ENCODE measurements at regions of chr12 and their contacts with region 1.

Region 1: DNA sequence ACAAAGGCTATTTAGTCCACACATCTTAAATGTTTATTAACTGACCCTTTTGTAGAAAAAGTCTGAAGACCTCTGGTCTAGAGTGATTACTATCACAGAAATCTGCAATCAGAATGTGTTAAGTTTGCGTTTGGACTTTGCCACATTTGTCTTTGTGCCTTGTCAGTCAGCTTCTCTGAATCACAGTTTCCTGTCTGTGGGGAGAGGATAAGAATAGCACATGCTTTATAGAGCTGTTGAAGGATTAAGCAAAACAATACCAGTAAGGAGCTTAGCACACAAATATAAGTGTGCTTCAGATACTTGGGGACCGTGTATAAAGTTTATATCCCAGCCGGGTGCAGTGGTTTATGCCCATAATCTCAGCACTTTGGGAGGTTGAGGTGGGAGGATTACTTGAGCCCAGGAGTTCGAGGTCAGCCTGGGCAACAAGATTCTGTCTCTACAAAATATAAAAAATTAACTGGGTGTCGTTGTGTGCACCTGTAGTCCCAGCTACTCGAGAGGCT is 63.0 kb upstream of the BTG1 start:
- DNase-seq: peak in 7 of 9 donors; percentile 55 to 76 (median 63)
- ATAC-seq: peak; percentile 92
- H3K4me3 ChIP-seq: peak overlapping the region; percentile 29
- H3K4me3 Mint-ChIP-seq: peak overlapping the region; percentile 58 to 90 (median 76)
- H3K27ac ChIP-seq: peak overlapping the region; percentile 48
- H3K27ac Mint-ChIP-seq: peak overlapping the region; percentile 72 to 97 (median 95)
- H3K4me1 ChIP-seq: peaks cover 18 to 25% of the 10 kb centered on the region in 2 donors
- H3K4me1 Mint-ChIP-seq: peaks cover 19 to 55% (median 41%) of the 10 kb centered on the region in 7 donors
- H3K27me3 ChIP-seq: no peaks in the 10 kb centered on the region
- H3K27me3 Mint-ChIP-seq: no peaks in the 10 kb centered on the region

Region 2: GRCh38 chr12:91811481-91812287 is 397.0 kb before region 1 on chr12:
- CTCF ChIA-PET with region 1: no interaction called
- POLR2A ChIA-PET with region 1: no interaction called
- intact Hi-C with region 1: loop called in 1 of 2 experiments (anchors 1 kb)
- DNase-seq: peak; percentile 64 to 79 (median 70)
- ATAC-seq: peak; percentile 90
- H3K4me3 ChIP-seq: peak overlapping the region; percentile 37
- H3K4me3 Mint-ChIP-seq: peak overlapping the region in 9 of 10 donors; percentile 31 to 80 (median 52)
- H3K27ac ChIP-seq: peak overlapping the region; percentile 22
- H3K27ac Mint-ChIP-seq: peak overlapping the region in 8 of 9 donors; percentile 81 to 97 (median 86)
- H3K4me1 ChIP-seq: peaks cover 0 to 15% of the 10 kb centered on the region in 2 donors
- H3K4me1 Mint-ChIP-seq: peaks cover 10 to 48% (median 35%) of the 10 kb centered on the region in 7 donors
- H3K27me3 ChIP-seq: no peaks in the 10 kb centered on the region
- H3K27me3 Mint-ChIP-seq: no peaks in the 10 kb centered on the region

Region 3: DNA sequence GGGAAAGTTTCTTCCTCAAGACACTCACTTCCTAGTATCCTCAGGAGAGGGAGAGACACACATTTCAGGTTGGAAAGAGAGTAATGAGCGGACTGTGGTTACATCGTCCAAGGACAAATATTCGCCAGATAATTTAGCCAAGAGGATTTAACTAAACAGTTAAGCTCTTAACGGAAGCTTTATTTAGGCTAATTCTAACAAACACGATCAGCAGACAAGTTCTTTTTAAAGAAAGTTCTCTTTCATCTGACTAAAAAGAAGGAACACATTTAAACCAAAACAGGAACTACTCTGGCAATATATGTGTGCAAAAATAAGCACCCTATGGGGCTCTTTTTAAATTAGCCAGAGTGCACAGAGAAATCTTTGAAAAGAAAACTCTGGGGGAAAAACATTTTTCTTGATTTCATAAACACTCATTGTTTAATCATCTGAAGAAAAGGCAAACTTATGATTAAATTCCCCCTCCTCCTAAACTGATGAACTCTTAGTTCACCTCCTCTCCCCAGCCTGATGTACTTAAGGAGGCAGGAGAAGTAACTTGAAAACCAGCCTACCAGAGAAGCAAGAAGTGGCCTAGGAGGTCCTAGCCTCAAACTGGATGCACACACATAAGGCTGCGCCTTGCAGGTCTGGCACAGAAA is 49.7 kb before region 1 on chr12:
- CTCF ChIA-PET with region 1: interaction called, 5 read pairs
- POLR2A ChIA-PET with region 1: interaction called, 9 read pairs
- intact Hi-C with region 1: loop called in 1 of 2 experiments (anchors 1 kb)
- DNase-seq: peak in 4 of 9 donors; percentile 32 to 58 (median 48)
- ATAC-seq: peak; percentile 84
- H3K4me3 ChIP-seq: peak overlapping the region; percentile 15
- H3K4me3 Mint-ChIP-seq: peak overlapping the region; percentile 49 to 87 (median 76)
- H3K27ac ChIP-seq: peak overlapping the region; percentile 70
- H3K27ac Mint-ChIP-seq: peak overlapping the region; percentile 65 to 99 (median 95)
- H3K4me1 ChIP-seq: peaks cover 0 to 46% of the 10 kb centered on the region in 2 donors
- H3K4me1 Mint-ChIP-seq: peaks cover 28 to 92% (median 78%) of the 10 kb centered on the region in 7 donors
- H3K27me3 ChIP-seq: no peaks in the 10 kb centered on the region
- H3K27me3 Mint-ChIP-seq: no peaks in the 10 kb centered on the region

Region 4: DNA sequence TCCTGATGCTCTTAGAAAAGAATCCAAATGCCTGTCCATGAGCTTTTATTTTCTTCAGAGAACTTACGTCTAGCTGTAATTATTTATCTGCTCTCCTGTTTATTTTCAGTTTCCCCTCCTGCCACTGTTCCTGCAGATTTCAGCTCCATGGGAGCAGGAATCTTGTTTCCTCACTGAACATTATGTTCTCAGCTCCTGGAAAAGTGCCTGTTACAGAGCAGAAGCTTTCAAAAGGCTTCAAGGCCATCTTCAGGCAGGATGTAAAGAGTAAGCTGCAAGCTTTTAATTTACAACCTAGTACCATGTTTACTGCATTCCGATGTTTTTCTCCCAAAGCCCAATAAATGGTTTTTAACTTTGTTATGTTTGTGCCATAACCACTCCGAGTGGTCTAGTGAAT is 35.4 kb after region 1 on chr12:
- CTCF ChIA-PET with region 1: no interaction called
- POLR2A ChIA-PET with region 1: interaction called, 5 read pairs
- intact Hi-C with region 1: loop called in 1 of 2 experiments (anchors 5 kb)
- DNase-seq: no peak
- ATAC-seq: no peak
- H3K4me3 ChIP-seq: no peak overlapping the region
- H3K4me3 Mint-ChIP-seq: peak overlapping the region in 5 of 10 donors; percentile 5 to 71 (median 15)
- H3K27ac ChIP-seq: no peak overlapping the region
- H3K27ac Mint-ChIP-seq: peak overlapping the region in 7 of 9 donors; percentile 8 to 72 (median 44)
- H3K4me1 ChIP-seq: peaks cover 0 to 10% of the 10 kb centered on the region in 2 donors
- H3K4me1 Mint-ChIP-seq: peaks cover 2 to 32% (median 22%) of the 10 kb centered on the region in 7 donors
- H3K27me3 ChIP-seq: no peaks in the 10 kb centered on the region
- H3K27me3 Mint-ChIP-seq: no peaks in the 10 kb centered on the region

Region 5: DNA sequence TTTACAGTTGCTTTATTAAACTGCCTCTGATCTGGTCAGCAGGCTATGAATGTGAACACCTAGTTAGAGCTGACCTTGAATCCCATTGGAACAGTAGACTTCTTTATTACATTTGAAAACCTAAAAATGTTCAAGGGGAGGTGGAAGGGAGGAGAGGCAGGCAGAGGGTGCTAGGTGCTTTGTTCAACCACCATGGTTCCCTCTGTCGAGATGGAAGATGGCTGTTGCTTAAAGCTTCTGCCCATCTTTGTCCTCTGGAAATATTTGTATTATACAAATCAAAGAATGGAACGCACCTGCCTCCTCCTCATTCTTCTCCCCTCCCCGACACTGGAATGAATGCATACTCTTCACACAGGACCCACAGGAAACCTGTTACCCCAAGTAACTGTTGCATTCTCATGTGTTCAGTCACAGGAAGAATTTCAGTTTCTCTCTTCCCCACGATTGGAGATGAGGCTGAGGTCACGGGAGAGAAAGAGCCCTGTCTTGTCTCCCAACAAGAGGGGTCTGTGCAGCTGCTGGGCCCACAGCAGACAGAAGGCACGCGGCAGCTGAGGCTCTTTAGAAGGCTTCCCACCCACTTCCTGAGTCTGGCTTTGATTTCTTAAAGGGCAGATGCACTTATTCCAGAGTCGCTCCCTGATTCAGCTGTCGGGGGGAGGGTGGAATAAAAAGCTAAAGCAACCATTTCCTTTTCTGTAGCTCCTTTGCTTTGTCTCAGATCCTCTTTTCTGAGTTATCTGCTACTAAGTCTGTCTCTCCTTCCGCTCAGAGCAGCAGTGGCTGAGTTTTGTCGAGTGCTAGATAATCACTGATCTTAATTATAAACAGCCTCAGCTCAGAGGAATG is 154.9 kb after region 1 on chr12:
- CTCF ChIA-PET with region 1: interaction called, 5 read pairs
- POLR2A ChIA-PET with region 1: interaction called, 7 read pairs
- intact Hi-C with region 1: loop called in 1 of 2 experiments (anchors 1 kb)
- DNase-seq: peak in 8 of 9 donors; percentile 23 to 75 (median 62)
- ATAC-seq: peak; percentile 65
- H3K4me3 ChIP-seq: peak overlapping the region; percentile 49
- H3K4me3 Mint-ChIP-seq: peak overlapping the region; percentile 68 to 90 (median 80)
- H3K27ac ChIP-seq: peak overlapping the region; percentile 69
- H3K27ac Mint-ChIP-seq: peak overlapping the region; percentile 92 to 99 (median 97)
- H3K4me1 ChIP-seq: peaks cover 35 to 67% of the 10 kb centered on the region in 2 donors
- H3K4me1 Mint-ChIP-seq: peaks cover 33 to 88% (median 76%) of the 10 kb centered on the region in 7 donors
- H3K27me3 ChIP-seq: no peaks in the 10 kb centered on the region
- H3K27me3 Mint-ChIP-seq: no peaks in the 10 kb centered on the region

Measured in naive thymus-derived CD4-positive, alpha-beta T cell (primary cell).